Mammary epithelial cell (primary cell): ENCODE measurements at regions of chr5 and their contacts with region 1.

Region 1: DNA sequence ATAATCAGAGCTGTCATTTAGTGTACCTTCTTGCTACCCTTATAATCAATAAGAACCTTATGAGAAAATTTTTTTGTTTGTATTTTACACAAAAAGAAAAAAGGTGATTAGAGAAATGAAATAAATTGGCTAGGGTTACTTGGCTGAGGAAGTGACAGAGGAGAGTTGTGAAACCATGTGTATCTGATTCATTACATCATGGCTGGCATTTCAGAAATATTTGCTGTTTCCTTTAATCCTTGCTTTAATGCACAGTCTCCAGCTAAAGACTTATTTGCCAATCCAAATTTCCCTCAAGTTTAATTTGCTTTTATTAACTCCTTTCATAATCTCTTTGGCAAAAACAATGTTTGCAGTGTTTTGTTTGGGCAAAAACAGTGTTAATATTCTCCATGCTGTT is 543.1 kb downstream of the KIF4B start:
- DNase-seq: no peak
- H3K4me3 ChIP-seq: no peak overlapping the region
- H3K27ac ChIP-seq: no peak overlapping the region
- H3K4me1 ChIP-seq: peaks cover 5% of the 10 kb centered on the region
- H3K27me3 ChIP-seq: no peaks in the 10 kb centered on the region
- CTCF ChIP-seq: no peak

Region 2: GRCh38 chr5:155514105-155514563 is 42.6 kb before region 1 on chr5:
- CTCF ChIA-PET with region 1: no interaction called
- dilution Hi-C with region 1: no loop called
- in situ Hi-C with region 1: no loop called
- intact Hi-C with region 1: loop called (anchors 1 kb)
- DNase-seq: peak; percentile 94
- H3K4me3 ChIP-seq: no peak overlapping the region
- H3K27ac ChIP-seq: no peak overlapping the region
- H3K4me1 ChIP-seq: no peaks in the 10 kb centered on the region
- H3K27me3 ChIP-seq: no peaks in the 10 kb centered on the region
- CTCF ChIP-seq: no peak